ENCODE measurements at regions of chr2 and their contacts with region 1.

Region 1: DNA sequence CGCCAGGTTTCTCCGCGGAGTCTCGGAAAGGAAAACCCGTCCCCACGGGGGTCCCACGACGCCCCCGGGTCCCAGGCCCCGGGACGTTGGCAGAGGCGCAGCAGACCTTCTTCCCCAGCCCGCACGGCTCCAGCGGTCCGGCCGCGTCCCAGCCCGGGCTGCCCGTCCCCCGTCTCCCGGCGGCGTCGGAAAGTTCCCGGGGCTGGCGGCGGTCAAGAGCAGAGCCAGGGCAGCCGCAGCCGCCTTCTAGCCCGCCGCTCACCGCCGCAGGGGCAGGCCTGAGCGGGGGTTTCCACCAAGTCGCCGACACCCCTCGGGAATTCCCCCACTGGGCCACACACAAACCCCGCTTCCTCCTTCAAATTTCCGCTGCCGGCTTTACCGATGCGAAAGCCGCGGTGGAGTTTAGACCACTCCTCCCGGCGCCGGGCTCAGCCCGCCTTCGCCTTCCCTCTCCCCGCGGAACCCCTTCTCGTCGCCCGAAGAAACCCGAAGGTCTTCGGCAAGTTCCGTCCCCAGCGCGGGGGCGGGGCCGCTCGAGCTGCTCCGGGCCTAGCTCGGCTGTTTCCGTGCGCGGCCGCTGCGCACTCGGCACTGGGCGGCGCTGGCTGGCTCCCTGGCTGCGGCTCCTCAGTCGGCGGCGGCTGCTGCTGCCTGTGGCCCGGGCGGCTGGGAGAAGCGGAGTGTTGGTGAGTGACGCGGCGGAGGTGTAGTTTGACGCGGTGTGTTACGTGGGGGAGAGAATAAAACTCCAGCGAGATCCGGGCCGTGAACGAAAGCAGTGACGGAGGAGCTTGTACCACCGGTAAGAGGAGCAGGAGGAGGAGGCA is at the start of gene CREB1:
- DNase-seq: peak; percentile 99
- H3K4me3 Mint-ChIP-seq: peak within 1 kb of the TSS; percentile 96
- H3K27ac Mint-ChIP-seq: peak within 1 kb of the TSS; percentile 98
- H3K4me1 Mint-ChIP-seq: peaks cover 63% of the 10 kb centered on the region
- H3K27me3 Mint-ChIP-seq: peaks cover 16% of the 10 kb centered on the region

Region 2: GRCh38 chr2:207408086-207408794 is 121.3 kb before region 1 on chr2:
- CTCF ChIA-PET with region 1: no interaction called
- DNase-seq: no peak
- H3K4me3 Mint-ChIP-seq: no peak overlapping the region
- H3K27ac Mint-ChIP-seq: no peak overlapping the region
- H3K4me1 Mint-ChIP-seq: no peaks in the 10 kb centered on the region
- H3K27me3 Mint-ChIP-seq: no peaks in the 10 kb centered on the region

Region 3: DNA sequence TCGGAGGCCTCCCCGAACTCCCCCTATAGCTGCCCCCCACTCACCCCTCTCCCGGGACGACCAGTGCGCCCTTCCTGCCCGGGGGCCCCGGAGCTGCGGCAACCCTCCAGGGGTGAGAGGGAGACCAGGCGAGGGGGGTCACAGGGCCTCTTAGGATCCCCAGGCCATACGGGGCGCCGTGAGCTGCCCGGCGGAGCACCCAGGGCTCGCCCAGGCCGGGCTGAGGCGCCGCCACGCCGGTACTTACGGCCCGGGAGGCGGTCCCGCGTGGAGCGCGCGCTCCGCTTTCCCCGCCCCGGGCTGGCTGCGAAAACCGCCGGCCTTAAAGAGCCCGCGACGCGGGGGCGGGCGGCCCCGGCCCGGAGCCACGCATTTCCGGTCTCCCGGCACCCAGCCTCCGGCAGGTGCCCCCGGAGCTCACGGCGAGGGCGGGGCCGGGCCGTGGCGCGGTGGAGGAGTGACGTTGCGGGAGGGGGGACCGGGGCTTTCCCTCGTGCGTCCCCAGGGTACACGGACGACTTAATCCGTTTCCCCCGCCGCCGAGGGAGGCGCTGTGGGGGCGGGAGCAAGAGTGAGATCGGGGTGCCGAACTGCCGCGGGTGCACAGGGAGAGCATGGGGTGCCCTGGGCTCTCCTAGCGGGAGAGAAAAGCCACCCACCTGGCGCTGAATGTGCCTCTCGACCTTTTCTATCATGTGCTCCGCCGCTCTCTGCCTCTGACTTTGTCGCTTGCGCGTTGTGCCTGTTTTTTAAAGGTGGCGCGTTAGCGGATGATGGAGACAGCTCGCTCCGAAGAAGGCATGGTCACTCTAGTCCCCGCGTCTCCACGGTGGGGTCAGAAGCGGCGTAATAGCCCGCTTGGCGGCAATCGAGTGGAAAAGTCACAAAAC is 95.7 kb after region 1 on chr2 and contains the start of gene METTL21A:
- CTCF ChIA-PET with region 1: interaction called, 10 read pairs
- DNase-seq: peak; percentile 95
- H3K4me3 Mint-ChIP-seq: peak within 1 kb of the TSS; percentile 93
- H3K27ac Mint-ChIP-seq: peak within 1 kb of the TSS; percentile 98
- H3K4me1 Mint-ChIP-seq: peaks cover 57% of the 10 kb centered on the region
- H3K27me3 Mint-ChIP-seq: no peaks in the 10 kb centered on the region

Measured in activated naive CD4-positive, alpha-beta T cell treated with anti-CD3 and anti-CD28 coated beads, Interleukin-2, amount 10 ng/mL, durations not matched to agents 7 days and 5 days (primary cell).